Activated B cell treated with CpG ODN at 0.5 μM for 24 hours (primary cell): ENCODE measurements at regions of chr10 and their contacts with region 1.

Region 1: GRCh38 chr10:62109587-62110293 is 158.9 kb downstream of the RTKN2 start:
- DNase-seq: no peak
- ATAC-seq: peak; percentile 72
- H3K4me3 Mint-ChIP-seq: peak overlapping the region; percentile 58
- H3K27ac Mint-ChIP-seq: peak overlapping the region; percentile 87
- H3K4me1 Mint-ChIP-seq: peaks cover 70% of the 10 kb centered on the region
- H3K27me3 Mint-ChIP-seq: no peaks in the 10 kb centered on the region
- CTCF ChIP-seq: no peak

Region 2: GRCh38 chr10:62166331-62167131 is 56.8 kb after region 1 on chr10:
- CTCF ChIA-PET with region 1: no interaction called
- POLR2A ChIA-PET with region 1: no interaction called
- intact Hi-C with region 1: loop called (anchors 1 kb)
- DNase-seq: no peak
- ATAC-seq: peak; percentile 96
- H3K4me3 Mint-ChIP-seq: peak overlapping the region; percentile 16
- H3K27ac Mint-ChIP-seq: peak overlapping the region; percentile 80
- H3K4me1 Mint-ChIP-seq: peaks cover 38% of the 10 kb centered on the region
- H3K27me3 Mint-ChIP-seq: no peaks in the 10 kb centered on the region
- CTCF ChIP-seq: no peak

Region 3: DNA sequence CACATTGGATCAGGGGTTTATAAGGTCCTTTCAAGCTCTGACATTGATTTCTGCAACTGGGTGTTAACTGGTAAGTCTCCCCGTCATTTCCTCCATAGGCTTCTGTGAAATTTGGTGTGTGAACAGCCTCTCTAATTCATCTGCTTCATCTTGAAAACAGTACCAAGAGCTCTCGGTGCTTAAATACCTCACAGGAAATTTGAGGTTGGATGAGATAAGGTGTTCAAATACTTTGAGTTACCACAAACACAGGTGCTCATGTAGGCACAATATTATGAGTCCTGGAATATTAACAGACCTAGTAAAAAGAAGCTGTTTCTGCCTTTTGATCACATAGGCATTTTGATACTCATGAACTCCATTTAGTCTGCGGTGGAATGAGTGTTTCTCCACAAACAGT is 73.7 kb after region 1 on chr10:
- CTCF ChIA-PET with region 1: no interaction called
- POLR2A ChIA-PET with region 1: no interaction called
- intact Hi-C with region 1: no loop called
- DNase-seq: no peak
- ATAC-seq: no peak
- H3K4me3 Mint-ChIP-seq: no peak overlapping the region
- H3K27ac Mint-ChIP-seq: no peak overlapping the region
- H3K4me1 Mint-ChIP-seq: peaks cover 26% of the 10 kb centered on the region
- H3K27me3 Mint-ChIP-seq: no peaks in the 10 kb centered on the region
- CTCF ChIP-seq: no peak

Region 4: GRCh38 chr10:62199584-62199983 is 89.8 kb after region 1 on chr10:
- CTCF ChIA-PET with region 1: no interaction called
- POLR2A ChIA-PET with region 1: no interaction called
- intact Hi-C with region 1: no loop called
- DNase-seq: no peak
- ATAC-seq: no peak
- H3K4me3 Mint-ChIP-seq: no peak overlapping the region
- H3K27ac Mint-ChIP-seq: no peak overlapping the region
- H3K4me1 Mint-ChIP-seq: peaks cover 16% of the 10 kb centered on the region
- H3K27me3 Mint-ChIP-seq: no peaks in the 10 kb centered on the region
- CTCF ChIP-seq: no peak